Caco-2 (cell line): ENCODE measurements at regions of chr7 and their contacts with region 1.

Region 1: DNA sequence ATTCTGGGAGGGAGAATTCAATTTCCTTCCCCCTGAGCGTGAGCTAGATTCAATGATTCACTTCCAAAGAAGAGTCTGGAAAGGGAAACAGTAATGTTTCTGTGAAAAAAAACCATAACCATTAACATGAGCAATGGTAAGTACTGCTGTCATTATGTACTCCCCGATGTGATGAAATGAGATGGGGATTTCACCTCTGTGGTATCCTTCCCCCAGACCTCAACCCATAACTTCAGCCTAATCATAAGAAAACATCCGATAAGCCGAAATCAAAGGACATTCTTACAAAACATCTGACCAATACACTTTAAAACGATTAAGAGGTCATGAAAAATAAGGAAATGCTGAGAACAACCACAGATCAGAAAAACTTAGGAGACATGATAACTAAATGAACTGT is 27.2 kb downstream of the EZH2 start:
- DNase-seq: no peak
- H3K4me3 ChIP-seq: no peak overlapping the region
- H3K4me3 Mint-ChIP-seq: no peak overlapping the region
- H3K27ac Mint-ChIP-seq: no peak overlapping the region
- H3K4me1 ChIP-seq: no peaks in the 10 kb centered on the region; the same call in 1 of the 2 replicates
- H3K4me1 Mint-ChIP-seq: peaks cover 9% of the 10 kb centered on the region
- H3K27me3 ChIP-seq: no peaks in the 10 kb centered on the region
- H3K27me3 Mint-ChIP-seq: no peaks in the 10 kb centered on the region
- CTCF ChIP-seq: no peak

Region 2: DNA sequence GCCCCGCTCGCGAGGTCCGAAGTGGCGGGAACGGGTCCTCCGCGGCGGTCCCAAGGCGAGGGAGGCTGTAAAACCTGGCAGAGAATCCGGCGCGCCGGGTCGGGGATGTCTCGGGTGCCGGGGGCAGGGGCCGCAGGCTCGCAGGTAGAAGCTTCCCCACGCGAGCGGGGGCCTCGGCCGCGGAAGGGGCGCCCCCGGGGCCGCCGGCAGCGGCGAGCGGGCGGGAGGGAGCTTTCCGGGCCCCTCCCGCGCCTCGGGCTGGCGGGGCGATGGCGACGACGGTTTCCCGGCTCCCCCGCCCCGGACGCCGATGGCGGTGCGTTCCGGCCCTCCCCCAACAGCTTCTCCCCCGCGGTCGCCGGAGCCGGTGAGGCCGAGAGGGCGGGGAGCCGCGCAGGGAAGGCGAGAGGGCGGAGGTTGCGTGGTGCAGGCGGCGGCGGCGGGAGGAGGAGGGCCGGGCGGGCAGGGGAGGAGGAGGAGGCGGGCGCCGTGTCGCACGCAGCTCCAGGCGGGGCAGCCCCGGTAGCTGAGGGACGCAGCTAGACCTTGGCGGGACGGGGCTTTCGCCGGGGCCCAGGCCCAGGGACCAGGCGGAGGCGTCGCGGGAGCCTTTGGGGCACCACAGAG is 158.4 kb before region 1 on chr7 and contains the start of gene CUL1:
- CTCF ChIA-PET with region 1: no interaction called
- POLR2A ChIA-PET with region 1: no interaction called
- intact Hi-C with region 1: no loop called
- DNase-seq: peak; percentile 91
- H3K4me3 ChIP-seq: peak within 1 kb of the TSS; percentile 88
- H3K4me3 Mint-ChIP-seq: peak within 1 kb of the TSS; percentile 81
- H3K27ac Mint-ChIP-seq: peak within 1 kb of the TSS; percentile 60
- H3K4me1 ChIP-seq: peaks cover 21% of the 10 kb centered on the region
- H3K4me1 Mint-ChIP-seq: peaks cover 31% of the 10 kb centered on the region
- H3K27me3 ChIP-seq: no peaks in the 10 kb centered on the region
- H3K27me3 Mint-ChIP-seq: no peaks in the 10 kb centered on the region
- CTCF ChIP-seq: no peak
- total RNA-seq, gene CUL1: 66.6 and 71.9 TPM in 2 replicates

Region 3: GRCh38 chr7:148712678-148713329 is 144.1 kb before region 1 on chr7:
- CTCF ChIA-PET with region 1: no interaction called
- POLR2A ChIA-PET with region 1: no interaction called
- intact Hi-C with region 1: no loop called
- DNase-seq: no peak
- H3K4me3 ChIP-seq: no peak overlapping the region
- H3K4me3 Mint-ChIP-seq: no peak overlapping the region
- H3K27ac Mint-ChIP-seq: no peak overlapping the region
- H3K4me1 ChIP-seq: peaks cover 27% of the 10 kb centered on the region
- H3K4me1 Mint-ChIP-seq: peaks cover 41% of the 10 kb centered on the region
- H3K27me3 ChIP-seq: no peaks in the 10 kb centered on the region
- H3K27me3 Mint-ChIP-seq: no peaks in the 10 kb centered on the region
- CTCF ChIP-seq: no peak

Region 4: GRCh38 chr7:148867596-148868377 is 10.9 kb after region 1 on chr7:
- CTCF ChIA-PET with region 1: interaction called, 4 read pairs
- POLR2A ChIA-PET with region 1: no interaction called
- intact Hi-C with region 1: loop called (anchors 1 kb)
- DNase-seq: no peak
- H3K4me3 ChIP-seq: no peak overlapping the region
- H3K4me3 Mint-ChIP-seq: no peak overlapping the region
- H3K27ac Mint-ChIP-seq: no peak overlapping the region
- H3K4me1 ChIP-seq: peaks cover 17% of the 10 kb centered on the region
- H3K4me1 Mint-ChIP-seq: peaks cover 15% of the 10 kb centered on the region
- H3K27me3 ChIP-seq: no peaks in the 10 kb centered on the region
- H3K27me3 Mint-ChIP-seq: no peaks in the 10 kb centered on the region
- CTCF ChIP-seq: no peak

Region 5: DNA sequence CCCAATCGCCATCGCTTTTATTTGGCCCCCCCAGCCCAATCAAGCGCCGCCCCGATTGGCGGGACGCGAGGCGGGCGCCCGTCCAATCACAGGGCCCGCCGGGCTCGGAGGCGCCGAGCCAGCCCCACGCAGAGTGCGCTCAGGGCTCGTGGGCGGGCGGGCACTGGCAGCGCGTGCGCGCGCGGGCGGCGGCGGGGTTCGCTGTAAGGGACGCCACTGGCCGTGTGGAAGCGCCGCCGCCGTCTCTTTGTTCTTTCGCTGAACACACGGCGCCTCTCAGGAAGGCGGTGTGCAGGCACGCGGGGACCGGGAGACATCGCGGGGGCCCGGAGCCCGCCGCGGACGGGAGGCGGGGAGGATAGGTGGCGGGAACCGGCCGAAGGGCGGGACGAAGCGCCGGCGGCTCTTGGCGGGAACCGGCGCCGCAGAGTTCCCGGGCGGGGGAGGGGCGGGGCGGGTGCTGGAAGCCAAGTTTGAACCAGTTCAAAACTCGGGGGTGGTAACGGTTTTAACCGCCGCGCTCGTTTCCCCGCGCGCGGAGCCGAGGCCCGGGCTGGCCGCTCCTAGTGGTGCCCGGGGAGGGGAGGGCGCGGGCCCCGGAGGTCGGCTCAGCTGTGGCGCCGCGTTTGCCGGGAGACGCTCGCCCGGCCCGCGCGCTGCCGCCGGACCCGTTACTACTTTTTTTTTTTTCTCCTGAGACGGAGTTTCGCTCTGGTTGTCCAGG is 27.6 kb after region 1 on chr7:
- CTCF ChIA-PET with region 1: no interaction called
- POLR2A ChIA-PET with region 1: no interaction called
- intact Hi-C with region 1: loop called (anchors 2 kb)
- DNase-seq: peak; percentile 91 to 96
- H3K4me3 ChIP-seq: peak overlapping the region; percentile 98
- H3K4me3 Mint-ChIP-seq: peak overlapping the region; percentile 95
- H3K27ac Mint-ChIP-seq: peak overlapping the region; percentile 93
- H3K4me1 ChIP-seq: peaks cover 6% of the 10 kb centered on the region; the same call in 1 of the 2 replicates
- H3K4me1 Mint-ChIP-seq: no peaks in the 10 kb centered on the region
- H3K27me3 ChIP-seq: no peaks in the 10 kb centered on the region
- H3K27me3 Mint-ChIP-seq: no peaks in the 10 kb centered on the region
- CTCF ChIP-seq: no peak

Region 6: DNA sequence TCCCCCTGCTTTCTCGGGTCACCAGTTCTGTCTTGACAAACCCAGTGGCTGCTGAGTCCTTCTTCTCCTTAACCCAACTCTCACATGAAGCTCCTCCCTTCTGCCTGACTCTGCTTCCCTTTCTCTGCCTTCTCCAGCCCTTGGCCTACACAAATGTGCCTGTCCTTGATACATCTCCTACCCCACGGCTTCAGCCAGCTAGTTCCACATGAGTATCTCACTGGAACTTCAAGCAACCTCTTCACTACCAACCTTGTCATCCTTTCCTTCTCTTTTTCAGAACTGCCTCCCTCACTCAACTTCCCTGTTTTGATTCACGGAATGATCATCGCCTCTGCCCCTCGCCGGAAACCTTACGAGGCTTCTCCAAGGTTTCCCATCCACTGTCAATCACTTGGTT is 115.5 kb after region 1 on chr7:
- CTCF ChIA-PET with region 1: no interaction called
- POLR2A ChIA-PET with region 1: no interaction called
- intact Hi-C with region 1: no loop called
- DNase-seq: no peak
- H3K4me3 ChIP-seq: no peak overlapping the region
- H3K4me3 Mint-ChIP-seq: no peak overlapping the region
- H3K27ac Mint-ChIP-seq: no peak overlapping the region
- H3K4me1 ChIP-seq: no peaks in the 10 kb centered on the region
- H3K4me1 Mint-ChIP-seq: no peaks in the 10 kb centered on the region
- H3K27me3 ChIP-seq: no peaks in the 10 kb centered on the region
- H3K27me3 Mint-ChIP-seq: no peaks in the 10 kb centered on the region
- CTCF ChIP-seq: no peak